ENCODE measurements at regions of chr1 and their contacts with region 1.

Region 1: DNA sequence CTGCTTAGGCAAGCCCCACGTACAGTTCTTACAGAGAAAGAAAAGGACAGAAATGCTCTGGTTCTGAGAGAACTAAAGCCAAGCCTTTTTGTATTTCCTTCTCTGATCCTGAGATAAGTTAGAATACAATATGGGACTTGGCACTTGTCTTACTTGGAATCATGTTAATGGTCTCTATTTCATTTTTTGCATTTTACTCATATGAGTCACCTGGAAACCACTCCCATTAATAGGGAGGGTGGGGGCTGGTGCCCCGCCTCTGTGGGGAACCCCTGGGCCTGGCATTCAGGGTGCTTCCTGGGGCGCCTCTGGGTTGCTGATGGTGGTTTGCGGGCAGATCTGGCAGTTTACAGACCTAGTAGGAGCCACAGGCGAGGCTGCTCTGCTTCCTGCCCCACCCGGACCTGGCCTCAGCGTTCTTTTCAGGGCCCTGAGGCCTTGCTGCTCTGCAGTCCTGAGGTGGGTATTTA is 26.7 kb downstream of the TSPAN2 start:
- DNase-seq: peak; percentile 90 to 98 (median 94)
- ATAC-seq: peak; percentile 89
- H3K4me3 ChIP-seq: no peak overlapping the region
- H3K4me3 Mint-ChIP-seq: peak overlapping the region; percentile 77
- H3K27ac ChIP-seq: peak overlapping the region; percentile 83 to 89
- H3K27ac Mint-ChIP-seq: peak overlapping the region; percentile 99
- H3K4me1 ChIP-seq: peaks cover 35% of the 10 kb centered on the region
- H3K4me1 Mint-ChIP-seq: peaks cover 44% of the 10 kb centered on the region
- H3K27me3 ChIP-seq: no peaks in the 10 kb centered on the region
- H3K27me3 Mint-ChIP-seq: no peaks in the 10 kb centered on the region
- CTCF ChIP-seq: no peak

Region 2: GRCh38 chr1:114780344-114781226 is 282.0 kb before region 1 on chr1 and contains the start of gene SIKE1:
- CTCF ChIA-PET with region 1: interaction called, 3 read pairs
- POLR2A ChIA-PET with region 1: no interaction called
- intact Hi-C with region 1: loop called (anchors 1 to 5 kb)
- DNase-seq: peak; percentile 87 to 98 (median 92)
- ATAC-seq: peak; percentile 98
- H3K4me3 ChIP-seq: peak within 1 kb of the TSS; percentile 84
- H3K4me3 Mint-ChIP-seq: peak within 1 kb of the TSS; percentile 100
- H3K27ac ChIP-seq: peak within 1 kb of the TSS; percentile 88 to 90
- H3K27ac Mint-ChIP-seq: peak within 1 kb of the TSS; percentile 96
- H3K4me1 ChIP-seq: peaks cover 11% of the 10 kb centered on the region
- H3K4me1 Mint-ChIP-seq: peaks cover 36% of the 10 kb centered on the region
- H3K27me3 ChIP-seq: no peaks in the 10 kb centered on the region
- H3K27me3 Mint-ChIP-seq: no peaks in the 10 kb centered on the region
- CTCF ChIP-seq: no peak
- total RNA-seq, gene SIKE1: 69.8 to 75.3 TPM

Region 3: GRCh38 chr1:115089420-115090185 is 27.0 kb after region 1 on chr1 and contains the start of gene TSPAN2:
- CTCF ChIA-PET with region 1: interaction called, 4 read pairs
- POLR2A ChIA-PET with region 1: interaction called, 4 read pairs
- intact Hi-C with region 1: loop called in 1 of 2 experiments (anchors 2 kb)
- DNase-seq: peak; percentile 31 to 80 (median 52)
- ATAC-seq: peak; percentile 85
- H3K4me3 ChIP-seq: peak within 1 kb of the TSS; percentile 78
- H3K4me3 Mint-ChIP-seq: peak within 1 kb of the TSS; percentile 88
- H3K27ac ChIP-seq: no peak within 1 kb of the TSS
- H3K27ac Mint-ChIP-seq: peak within 1 kb of the TSS; percentile 73
- H3K4me1 ChIP-seq: peaks cover 42% of the 10 kb centered on the region
- H3K4me1 Mint-ChIP-seq: peaks cover 54% of the 10 kb centered on the region
- H3K27me3 ChIP-seq: no peaks in the 10 kb centered on the region
- H3K27me3 Mint-ChIP-seq: peaks cover 4% of the 10 kb centered on the region
- CTCF ChIP-seq: no peak
- total RNA-seq, gene TSPAN2: 0.95 to 1.6 TPM

Region 4: GRCh38 chr1:115098979-115099692 is 36.6 kb after region 1 on chr1:
- CTCF ChIA-PET with region 1: interaction called, 3 read pairs
- POLR2A ChIA-PET with region 1: interaction called, 37 read pairs
- intact Hi-C with region 1: loop called (anchors 1 to 2 kb)
- DNase-seq: peak; percentile 50 to 95 (median 69)
- ATAC-seq: peak; percentile 90
- H3K4me3 ChIP-seq: peak overlapping the region; percentile 55
- H3K4me3 Mint-ChIP-seq: peak overlapping the region; percentile 89
- H3K27ac ChIP-seq: peak overlapping the region; percentile 90 to 91
- H3K27ac Mint-ChIP-seq: peak overlapping the region; percentile 93
- H3K4me1 ChIP-seq: peaks cover 27% of the 10 kb centered on the region
- H3K4me1 Mint-ChIP-seq: peaks cover 60% of the 10 kb centered on the region
- H3K27me3 ChIP-seq: no peaks in the 10 kb centered on the region
- H3K27me3 Mint-ChIP-seq: no peaks in the 10 kb centered on the region
- CTCF ChIP-seq: no peak